Posterior vena cava (tissue), 2 donors: ENCODE measurements at regions of chr1 and their contacts with region 1.

Region 1: DNA sequence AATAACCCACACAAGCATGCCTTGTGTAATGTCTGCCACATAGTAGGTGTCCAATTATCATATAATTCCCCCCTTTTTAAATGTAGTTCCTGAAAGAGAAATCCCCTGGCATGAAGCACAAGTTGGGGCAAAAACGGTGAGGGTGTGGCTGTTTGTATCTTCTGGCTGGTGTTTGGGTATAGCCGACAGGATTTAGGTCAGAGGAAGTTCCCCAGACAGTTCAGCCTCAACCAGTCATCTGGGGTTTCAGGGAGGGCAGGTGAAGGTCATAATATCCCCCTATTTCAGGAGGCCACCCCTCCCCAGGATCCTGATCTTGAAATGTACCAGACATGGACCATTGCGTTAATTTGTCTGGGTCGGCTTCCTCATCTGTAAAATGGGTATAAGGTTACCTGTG is 29.1 kb upstream of the JUN start:
- DNase-seq: no peak

Region 2: DNA sequence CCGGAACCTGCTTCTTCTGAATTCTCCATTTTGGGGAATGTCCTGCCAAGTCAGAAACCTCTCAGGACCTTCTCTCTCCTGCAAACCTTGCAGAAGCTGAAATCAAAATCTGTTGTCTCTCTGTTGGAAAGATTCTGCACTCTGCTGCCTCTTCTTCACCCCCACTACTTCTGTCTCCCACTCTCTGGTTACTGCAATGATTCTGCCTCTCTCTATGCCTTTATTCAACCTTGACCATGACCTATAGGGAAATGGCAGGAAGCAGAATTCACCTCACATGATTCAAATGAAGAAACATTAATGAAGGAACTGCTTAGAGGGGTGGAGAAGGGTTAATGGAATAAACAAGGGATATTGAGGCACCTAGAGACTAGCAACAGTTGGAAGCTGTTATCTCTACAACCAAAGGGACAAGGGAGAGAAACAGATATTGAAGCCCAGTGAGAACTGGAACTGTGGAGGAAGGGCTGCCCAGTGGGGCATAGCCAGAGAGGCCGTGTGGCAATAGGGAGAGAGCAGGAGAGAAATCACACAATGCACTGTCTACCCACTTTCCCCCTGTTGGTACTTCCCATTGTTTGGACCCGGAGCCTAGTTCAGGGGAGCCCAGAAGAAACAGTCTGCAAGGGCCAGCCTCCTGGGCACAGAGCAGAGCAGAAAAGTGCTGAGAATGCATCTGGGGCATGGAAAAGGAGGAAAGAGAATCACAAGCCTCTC is 47.0 kb after region 1 on chr1:
- intact Hi-C with region 1: loop called in 1 of 2 experiments (anchors 1 kb)
- DNase-seq: no peak

Region 3: GRCh38 chr1:59788825-59789224 is 975.9 kb after region 1 on chr1:
- intact Hi-C with region 1: no loop called
- DNase-seq: no peak